WTC11 (cell line): ENCODE measurements at regions of chr1 and their contacts with region 1.

Region 1: GRCh38 chr1:206982216-206982615 is 12.0 kb upstream of the FCAMR start:
- DNase-seq: peak; percentile 59
- ATAC-seq: peak; percentile 71
- H3K4me3 Mint-ChIP-seq: no peak overlapping the region
- H3K27ac Mint-ChIP-seq: no peak overlapping the region
- H3K4me1 Mint-ChIP-seq: peaks cover 39% of the 10 kb centered on the region
- H3K27me3 Mint-ChIP-seq: peaks cover 43% of the 10 kb centered on the region
- CTCF ChIP-seq: peak; percentile 21; the same call in 1 of the 2 replicates

Region 2: GRCh38 chr1:206808615-206809014 is 173.6 kb before region 1 on chr1:
- CTCF ChIA-PET with region 1: interaction called, 11 read pairs
- POLR2A ChIA-PET with region 1: no interaction called
- DNase-seq: no peak
- ATAC-seq: peak; percentile 86
- H3K4me3 Mint-ChIP-seq: no peak overlapping the region
- H3K27ac Mint-ChIP-seq: no peak overlapping the region
- H3K4me1 Mint-ChIP-seq: no peaks in the 10 kb centered on the region
- H3K27me3 Mint-ChIP-seq: peaks cover 2% of the 10 kb centered on the region; the same call in 1 of the 2 replicates
- CTCF ChIP-seq: no peak

Region 3: DNA sequence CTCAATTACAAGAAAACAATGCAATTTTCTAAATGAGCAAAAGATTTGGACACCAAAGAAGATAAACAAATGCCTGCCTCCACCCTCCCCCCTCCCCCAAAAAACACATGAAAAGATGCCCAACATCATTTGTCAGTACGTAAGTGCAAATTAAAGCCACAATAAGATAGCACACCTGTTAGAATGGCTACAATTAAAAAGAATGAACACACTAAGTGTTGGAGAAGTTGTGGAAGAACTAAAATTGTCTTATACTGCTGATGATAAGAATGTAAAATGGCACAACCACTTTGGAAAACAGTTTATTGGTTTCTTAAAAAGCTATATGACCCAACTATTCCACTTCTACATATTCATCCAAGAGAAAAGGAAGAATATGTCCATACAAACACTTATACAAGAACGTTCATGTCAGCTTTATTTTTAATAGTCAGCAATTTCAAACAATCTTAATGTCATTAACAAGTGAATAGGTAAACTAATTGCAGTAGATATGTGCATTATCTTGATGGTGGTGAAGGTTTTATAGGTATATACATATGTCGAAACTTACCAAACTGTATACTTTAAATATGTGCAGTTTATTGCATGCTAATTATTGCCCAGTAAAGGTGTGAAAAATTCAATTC is 106.3 kb before region 1 on chr1:
- CTCF ChIA-PET with region 1: no interaction called
- POLR2A ChIA-PET with region 1: no interaction called
- DNase-seq: no peak
- ATAC-seq: no peak
- H3K4me3 Mint-ChIP-seq: no peak overlapping the region
- H3K27ac Mint-ChIP-seq: no peak overlapping the region
- H3K4me1 Mint-ChIP-seq: no peaks in the 10 kb centered on the region
- H3K27me3 Mint-ChIP-seq: peaks cover 5% of the 10 kb centered on the region
- CTCF ChIP-seq: no peak

Region 4: DNA sequence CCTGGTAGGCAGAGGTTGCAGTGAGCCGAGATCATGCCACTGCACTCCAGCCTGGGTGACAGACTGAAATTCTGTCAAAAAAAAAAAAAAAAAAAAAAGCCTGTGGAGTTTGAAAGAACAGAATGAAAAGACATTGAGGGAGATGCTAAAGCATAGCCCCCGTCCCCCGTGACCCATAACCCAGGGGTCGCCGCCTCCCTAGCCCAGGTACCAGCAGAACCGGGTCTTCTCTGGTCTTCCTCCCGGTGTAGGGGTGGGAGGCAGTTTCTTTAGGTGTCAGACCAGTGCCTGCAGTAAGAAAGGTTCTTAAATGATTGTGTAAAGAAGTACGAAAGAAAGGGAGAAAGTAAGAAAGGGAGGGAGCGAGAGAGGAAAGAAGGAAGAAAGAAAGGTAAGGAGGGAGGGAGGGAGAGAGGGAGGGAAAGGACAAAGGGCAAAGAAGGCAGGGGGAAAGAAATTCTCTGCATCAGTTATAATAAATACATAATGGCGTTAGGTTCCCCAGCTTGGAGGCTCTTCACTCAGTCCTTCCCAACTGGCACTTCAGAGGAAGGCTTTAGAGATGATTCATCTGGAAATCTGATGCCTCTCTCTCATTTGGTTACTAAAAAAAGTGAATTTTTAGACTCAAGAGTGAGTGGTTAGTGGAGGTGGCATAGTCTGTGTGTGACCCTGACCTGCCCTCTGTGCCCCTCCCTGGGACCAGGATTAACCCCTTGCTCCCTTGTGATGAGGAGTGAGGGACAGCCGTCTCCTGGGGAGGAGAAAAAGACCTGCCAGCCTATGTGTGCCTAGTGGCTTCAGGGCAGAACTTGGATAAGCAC is 83.9 kb before region 1 on chr1:
- CTCF ChIA-PET with region 1: no interaction called
- POLR2A ChIA-PET with region 1: no interaction called
- DNase-seq: no peak
- ATAC-seq: no peak
- H3K4me3 Mint-ChIP-seq: no peak overlapping the region
- H3K27ac Mint-ChIP-seq: no peak overlapping the region; the same call in 1 of the 2 replicates
- H3K4me1 Mint-ChIP-seq: peaks cover 5% of the 10 kb centered on the region; the same call in 1 of the 2 replicates
- H3K27me3 Mint-ChIP-seq: no peaks in the 10 kb centered on the region
- CTCF ChIP-seq: no peak

Region 5: DNA sequence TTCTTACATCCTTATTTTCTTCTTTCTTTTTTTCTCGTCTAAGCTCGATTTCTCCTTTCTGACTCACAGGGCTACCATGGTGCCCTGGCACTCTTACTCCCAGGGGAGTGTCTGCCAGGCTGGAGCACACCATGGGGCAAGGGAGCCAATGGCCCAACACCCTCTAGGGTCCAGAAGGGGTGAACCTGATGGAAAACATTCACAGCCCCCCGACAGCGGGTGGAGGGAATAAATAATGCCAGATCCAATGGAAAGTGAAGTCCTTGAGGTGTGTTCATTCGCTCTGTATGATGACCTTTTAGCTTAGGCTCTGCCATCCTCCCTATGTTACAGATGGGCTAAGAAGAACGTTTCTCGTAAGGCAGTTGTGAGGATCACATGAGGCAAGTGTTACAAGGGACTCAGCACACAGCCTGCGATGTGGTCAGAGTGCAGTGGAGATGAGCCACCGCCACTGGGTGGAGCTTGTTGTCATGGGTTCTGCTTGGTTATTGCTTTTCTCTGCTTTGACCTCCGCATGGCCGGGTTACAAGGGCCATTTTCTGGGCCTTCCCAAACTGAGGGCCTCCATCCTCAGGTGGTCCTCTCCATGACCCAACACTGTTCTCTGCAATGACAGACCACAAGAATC is 57.0 kb before region 1 on chr1:
- CTCF ChIA-PET with region 1: interaction called, 15 read pairs
- POLR2A ChIA-PET with region 1: no interaction called
- DNase-seq: peak; percentile 25
- ATAC-seq: peak; percentile 85
- H3K4me3 Mint-ChIP-seq: no peak overlapping the region
- H3K27ac Mint-ChIP-seq: no peak overlapping the region
- H3K4me1 Mint-ChIP-seq: no peaks in the 10 kb centered on the region
- H3K27me3 Mint-ChIP-seq: no peaks in the 10 kb centered on the region; the same call in 1 of the 2 replicates
- CTCF ChIP-seq: no peak

Region 6: DNA sequence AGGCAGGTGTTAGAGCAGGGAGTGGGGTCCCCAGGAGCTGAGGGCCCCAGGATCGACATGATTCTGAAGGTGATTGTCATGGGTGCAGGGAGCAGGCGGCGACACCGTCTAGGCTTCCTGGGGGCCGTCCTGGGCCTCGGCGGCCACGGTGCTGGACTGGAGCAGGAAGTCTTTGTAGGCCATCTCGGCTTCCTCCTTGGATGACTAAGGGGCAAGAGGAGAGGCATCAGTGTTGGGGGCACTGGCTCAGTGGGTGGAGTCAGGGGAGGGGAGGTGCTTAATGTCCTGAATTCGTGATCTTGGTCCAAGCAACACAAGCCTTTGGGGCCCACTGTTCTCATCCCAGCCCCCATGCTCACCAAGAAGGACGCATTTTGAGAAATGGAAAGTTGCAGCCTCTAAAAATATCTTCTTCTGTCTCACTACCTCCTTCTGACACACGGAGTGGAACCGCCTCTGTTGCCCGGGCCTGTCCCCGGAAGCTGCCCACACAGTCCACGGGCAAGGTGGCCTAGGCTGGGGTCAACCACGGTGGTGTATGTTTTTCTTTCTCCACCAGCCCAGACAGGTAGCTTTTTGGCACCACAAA is 51.9 kb before region 1 on chr1:
- CTCF ChIA-PET with region 1: interaction called, 87 read pairs
- POLR2A ChIA-PET with region 1: no interaction called
- DNase-seq: no peak
- ATAC-seq: no peak
- H3K4me3 Mint-ChIP-seq: no peak overlapping the region
- H3K27ac Mint-ChIP-seq: peak overlapping the region; percentile 8; the same call in 1 of the 2 replicates
- H3K4me1 Mint-ChIP-seq: no peaks in the 10 kb centered on the region
- H3K27me3 Mint-ChIP-seq: no peaks in the 10 kb centered on the region; the same call in 1 of the 2 replicates
- CTCF ChIP-seq: no peak

Region 7: DNA sequence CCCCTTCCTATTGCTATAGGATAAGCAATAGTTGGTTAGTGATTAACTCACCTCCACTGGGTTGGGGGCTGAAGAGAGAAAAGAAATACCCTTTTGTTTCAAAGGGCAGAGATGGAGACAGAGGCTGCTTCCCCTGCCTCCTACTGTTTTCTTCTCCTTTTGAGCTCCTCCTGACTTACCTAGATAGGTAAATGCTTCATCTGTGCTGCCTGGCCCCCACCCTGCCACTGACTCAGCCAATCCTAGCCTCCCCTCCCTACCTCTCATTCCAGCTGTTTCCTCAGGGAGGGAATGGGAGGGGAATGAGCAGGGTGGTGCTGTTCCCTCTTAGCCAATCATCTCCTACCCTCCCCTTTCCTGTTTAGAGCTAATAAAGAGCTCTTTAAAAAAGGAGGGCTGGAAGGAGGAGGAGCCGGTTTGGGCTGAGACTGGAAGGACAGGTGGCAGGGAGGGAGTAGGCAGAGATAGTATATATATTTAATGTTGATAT is 50.4 kb after region 1 on chr1 and contains the start of gene C1orf116:
- CTCF ChIA-PET with region 1: interaction called, 10 read pairs
- POLR2A ChIA-PET with region 1: interaction called, 3 read pairs
- DNase-seq: peak; percentile 70
- ATAC-seq: peak; percentile 100
- H3K4me3 Mint-ChIP-seq: peak within 1 kb of the TSS; percentile 48
- H3K27ac Mint-ChIP-seq: peak within 1 kb of the TSS; percentile 88
- H3K4me1 Mint-ChIP-seq: peaks cover 49% of the 10 kb centered on the region
- H3K27me3 Mint-ChIP-seq: no peaks in the 10 kb centered on the region
- CTCF ChIP-seq: no peak
- total RNA-seq, gene C1orf116: 2.3 to 2.7 TPM (median 2.4 TPM) in 3 replicates

Region 8: GRCh38 chr1:207282493-207283380 is 300.5 kb after region 1 on chr1:
- CTCF ChIA-PET with region 1: no interaction called
- POLR2A ChIA-PET with region 1: no interaction called
- DNase-seq: no peak
- ATAC-seq: no peak
- H3K4me3 Mint-ChIP-seq: no peak overlapping the region
- H3K27ac Mint-ChIP-seq: no peak overlapping the region
- H3K4me1 Mint-ChIP-seq: peaks cover 13% of the 10 kb centered on the region
- H3K27me3 Mint-ChIP-seq: no peaks in the 10 kb centered on the region
- CTCF ChIP-seq: no peak